Heart left ventricle (tissue), 16 donors: ENCODE measurements at regions of chr17 and their contacts with region 1.

Region 1: GRCh38 chr17:40559954-40560591 is 5.2 kb downstream of the CCR7 start:
- DNase-seq: peak; percentile 84 to 91 (median 87)
- ATAC-seq: peak; percentile 72 to 85 (median 83)
- H3K4me3 ChIP-seq: peak overlapping the region in 7 of 12 donors; percentile 6 to 48 (median 30)
- H3K27ac ChIP-seq: peak overlapping the region in 11 of 12 donors; percentile 47 to 92 (median 71)
- H3K4me1 ChIP-seq: peaks cover 12 to 68% (median 44%) of the 10 kb centered on the region in 12 donors
- H3K27me3 ChIP-seq: peaks cover 0 to 10% (median 0%) of the 10 kb centered on the region in 9 donors
- CTCF ChIP-seq: peak; percentile 93 to 99 (median 98)
- POLR2A ChIP-seq: peak in 1 of 2 donors; percentile 27

Region 2: DNA sequence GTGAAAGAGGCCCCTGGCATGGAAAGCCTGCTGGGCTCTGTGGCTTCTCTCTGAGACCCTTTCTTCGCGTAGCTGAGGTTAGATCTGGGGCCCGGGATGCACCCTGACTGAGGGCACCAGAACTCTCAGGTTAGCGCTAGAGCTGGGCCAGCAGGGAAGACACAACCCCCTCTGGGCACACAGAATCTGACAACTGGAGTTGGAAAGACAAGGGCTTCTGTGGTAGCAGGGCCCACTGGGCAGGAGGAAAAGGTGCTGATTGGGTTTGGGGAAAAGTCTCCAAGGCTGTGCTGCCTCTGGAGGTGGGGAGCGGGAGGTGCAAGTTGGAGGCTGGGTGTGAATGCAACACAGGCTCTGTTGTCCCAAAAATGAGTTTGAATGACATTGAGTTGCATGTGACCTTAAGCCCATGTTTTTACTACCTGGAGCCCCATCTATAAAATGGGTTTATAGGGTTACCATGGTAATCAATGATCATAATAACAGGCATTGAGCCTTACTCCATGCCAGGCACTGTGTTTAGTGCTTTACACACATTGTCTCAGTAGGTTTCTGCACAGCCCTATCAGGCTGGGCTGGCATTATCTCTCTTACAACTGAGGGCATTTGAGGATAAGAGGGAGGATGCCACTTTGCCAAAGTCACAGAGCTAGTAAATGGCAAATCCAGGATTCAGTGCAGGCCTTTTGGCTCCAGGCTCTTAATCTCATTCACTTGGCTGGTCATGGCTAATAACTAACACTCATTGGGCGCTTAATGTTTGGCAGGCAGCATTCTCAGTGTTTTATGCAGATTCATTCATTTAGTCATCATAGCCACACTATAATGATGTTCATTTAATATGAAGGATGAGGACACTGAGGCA is 126.3 kb before region 1 on chr17:
- intact Hi-C with region 1: loop called in 1 of 10 experiments (anchors 10 kb)
- DNase-seq: no peak
- ATAC-seq: peak in 3 of 4 donors; percentile 38 to 40 (median 39)
- H3K4me3 ChIP-seq: no peak overlapping the region
- H3K27ac ChIP-seq: peak overlapping the region in 8 of 12 donors; percentile 4 to 84 (median 38)
- H3K4me1 ChIP-seq: peaks cover 0 to 29% (median 15%) of the 10 kb centered on the region in 12 donors
- H3K27me3 ChIP-seq: no peaks in the 10 kb centered on the region
- CTCF ChIP-seq: peak in 11 of 12 donors; percentile 24 to 60 (median 39)
- POLR2A ChIP-seq: no peak

Region 3: DNA sequence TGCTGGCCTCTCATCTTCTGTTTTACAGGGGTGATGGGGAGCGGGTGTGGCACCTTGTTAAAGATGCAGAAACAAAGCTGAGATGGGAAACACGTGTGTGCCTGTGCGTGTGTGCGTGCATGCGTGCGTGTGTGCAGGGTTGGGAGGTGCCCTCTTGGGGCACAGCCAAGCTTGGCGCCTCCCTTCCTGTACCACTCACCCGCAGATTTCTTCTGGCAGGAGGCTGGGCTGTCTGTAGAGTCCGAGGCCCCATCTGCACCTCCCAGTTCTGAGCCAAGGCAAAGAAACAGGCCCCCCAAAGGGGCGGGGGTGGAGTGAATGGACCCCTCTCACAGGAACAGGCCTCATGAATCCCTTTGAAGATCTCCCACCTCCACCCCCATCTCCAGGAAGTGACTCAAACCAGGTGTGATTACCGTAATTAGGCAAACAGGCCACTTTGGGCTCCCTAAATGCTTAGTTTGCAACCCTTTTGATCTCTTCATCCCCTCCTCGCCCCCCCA is 79.5 kb before region 1 on chr17:
- intact Hi-C with region 1: loop called in 2 of 10 experiments (anchors 5 kb)
- DNase-seq: peak in 1 of 5 donors; percentile 51
- ATAC-seq: peak in 3 of 4 donors; percentile 20 to 60 (median 30)
- H3K4me3 ChIP-seq: no peak overlapping the region
- H3K27ac ChIP-seq: peak overlapping the region in 1 of 12 donors; percentile 86
- H3K4me1 ChIP-seq: peaks cover 0 to 31% (median 5%) of the 10 kb centered on the region in 12 donors
- H3K27me3 ChIP-seq: no peaks in the 10 kb centered on the region
- CTCF ChIP-seq: no peak
- POLR2A ChIP-seq: no peak

Region 4: DNA sequence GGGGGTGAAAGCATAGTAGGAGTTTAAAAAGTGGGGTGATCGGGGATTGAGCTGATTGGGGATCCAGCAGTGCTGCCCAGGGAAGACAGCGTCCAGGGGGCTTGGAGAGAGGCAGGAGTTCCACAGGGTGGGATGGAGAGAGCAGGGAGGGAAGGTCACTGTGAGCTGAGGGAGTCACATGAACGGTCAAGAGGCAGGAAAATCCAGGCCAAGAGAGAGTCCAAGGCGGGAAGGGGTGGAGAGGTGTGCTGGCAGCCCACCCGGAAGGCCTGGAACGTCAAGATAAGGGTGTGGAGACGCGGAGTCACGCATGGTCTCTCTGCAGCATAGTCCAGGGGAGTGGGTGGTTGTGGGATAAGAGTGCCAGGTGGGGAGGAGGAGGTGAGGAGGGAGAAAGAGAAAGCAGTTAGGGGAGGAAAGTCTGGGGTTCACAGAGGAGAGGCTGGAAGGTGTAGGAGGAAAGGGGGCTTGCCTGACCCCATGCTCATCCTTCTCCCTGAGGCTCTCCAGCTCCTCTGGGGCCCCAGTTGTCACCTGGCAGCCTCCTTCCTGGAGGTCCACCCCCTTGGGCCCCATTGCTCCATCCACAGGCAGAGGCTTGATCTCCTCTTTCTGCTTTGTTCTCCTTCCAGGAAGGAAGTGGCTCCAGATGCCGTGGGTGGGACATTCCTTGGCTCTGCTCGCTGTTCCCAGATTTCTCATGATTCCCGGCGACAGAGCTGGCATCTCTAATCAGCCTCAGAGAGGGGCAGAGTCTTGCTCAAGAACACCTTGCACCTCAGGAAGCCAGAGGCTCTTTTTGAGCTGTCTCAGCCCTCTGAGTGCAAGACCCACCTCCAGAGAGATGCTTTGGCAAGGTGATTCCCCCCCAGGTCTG is 23.5 kb before region 1 on chr17:
- intact Hi-C with region 1: loop called in 4 of 10 experiments (anchors 1 to 2 kb)
- DNase-seq: peak in 4 of 5 donors; percentile 71 to 80 (median 76)
- ATAC-seq: peak; percentile 45 to 75 (median 64)
- H3K4me3 ChIP-seq: no peak overlapping the region
- H3K27ac ChIP-seq: peak overlapping the region; percentile 59 to 98 (median 88)
- H3K4me1 ChIP-seq: peaks cover 27 to 97% (median 71%) of the 10 kb centered on the region in 12 donors
- H3K27me3 ChIP-seq: no peaks in the 10 kb centered on the region
- CTCF ChIP-seq: no peak
- POLR2A ChIP-seq: no peak

Region 5: DNA sequence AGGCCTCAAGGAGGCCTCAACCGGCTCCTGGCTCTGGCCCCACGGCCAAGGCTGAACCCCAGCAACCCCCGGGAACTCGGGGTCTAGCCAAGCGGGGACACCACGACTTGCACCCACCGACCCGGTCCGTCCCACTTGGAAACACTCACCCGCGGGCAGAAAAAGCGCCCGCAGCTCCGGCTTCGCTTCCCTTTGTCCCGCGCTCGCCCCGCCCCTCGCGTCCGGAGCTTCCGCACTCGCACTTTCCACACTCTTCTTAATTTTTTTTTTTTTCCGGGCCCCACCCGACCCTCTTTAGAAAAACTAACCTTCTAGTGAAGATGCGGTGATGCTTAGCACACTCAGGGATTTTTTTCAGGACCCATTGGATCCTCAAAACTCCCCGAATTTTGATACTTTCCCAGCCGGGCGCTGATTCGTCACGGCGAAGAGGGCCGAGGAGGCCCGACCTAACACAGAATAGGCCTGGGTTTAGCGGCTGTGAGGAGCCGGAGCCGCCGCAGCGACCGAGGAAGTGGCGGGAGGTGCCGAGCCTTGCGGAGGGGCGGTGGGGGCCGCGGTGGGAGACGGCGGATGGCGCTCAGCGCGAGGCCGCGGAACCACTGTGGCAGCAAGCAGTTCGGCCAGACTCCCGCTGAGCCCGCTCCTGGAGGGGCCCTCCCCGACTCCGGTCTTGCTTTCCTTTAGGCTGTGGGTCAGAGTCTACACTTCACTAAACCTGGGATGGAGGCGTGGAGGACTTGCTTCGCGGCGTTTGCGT is 87.7 kb after region 1 on chr17 and contains the start of gene SMARCE1:
- intact Hi-C with region 1: no loop called
- DNase-seq: peak; percentile 65 to 84 (median 75)
- ATAC-seq: peak; percentile 76 to 90 (median 90)
- H3K4me3 ChIP-seq: peak within 1 kb of the TSS; percentile 70 to 97 (median 90)
- H3K27ac ChIP-seq: peak within 1 kb of the TSS; percentile 95 to 100 (median 98)
- H3K4me1 ChIP-seq: peaks cover 0 to 38% (median 27%) of the 10 kb centered on the region in 12 donors
- H3K27me3 ChIP-seq: no peaks in the 10 kb centered on the region
- CTCF ChIP-seq: no peak
- POLR2A ChIP-seq: no peak
- total RNA-seq, gene SMARCE1: 51.8 to 88.0 (median 59.4) TPM